Ascending aorta (tissue), 2 donors: ENCODE measurements at regions of chr19 and their contacts with region 1.

Region 1: DNA sequence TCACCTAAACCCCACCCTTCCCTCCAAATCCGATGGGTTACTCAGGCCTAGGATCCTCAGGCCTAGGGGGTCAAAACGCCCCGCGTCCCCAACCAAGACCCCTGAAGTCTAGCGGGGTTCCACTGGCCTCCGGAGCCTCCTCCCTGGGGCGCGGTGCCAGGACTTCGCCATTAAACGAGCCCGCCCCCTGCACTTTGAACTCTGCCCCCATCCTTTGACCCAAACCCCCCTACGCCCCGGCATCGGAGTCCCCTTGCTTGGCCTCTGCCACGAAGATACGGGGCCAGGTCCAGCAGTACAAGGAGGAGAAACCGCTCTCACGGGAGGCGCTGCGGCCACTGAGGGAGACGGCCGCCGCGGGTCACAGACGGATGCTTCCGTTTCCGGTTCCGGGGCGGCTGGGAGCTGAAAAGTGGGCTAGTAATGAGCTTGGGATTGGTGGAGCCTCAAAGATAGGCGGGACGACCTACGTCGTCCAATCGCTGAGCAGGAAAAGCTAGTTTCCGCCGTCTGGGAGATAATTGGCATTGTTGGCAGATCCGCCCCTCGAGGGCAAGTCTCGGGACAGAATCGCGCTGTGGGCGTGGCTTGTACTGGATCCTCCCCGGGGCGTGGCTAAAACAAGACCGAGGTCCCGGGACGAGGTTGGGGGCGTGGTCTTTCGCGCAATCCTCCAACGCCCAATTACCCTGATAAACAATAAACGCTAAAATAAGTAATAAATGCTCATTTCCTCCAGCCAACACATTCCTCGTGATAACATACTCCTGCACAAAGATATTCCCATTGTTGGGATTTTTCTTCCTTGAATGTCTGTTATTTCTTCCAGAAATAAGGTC is 5.7 kb upstream of the ZNF77 start:
- DNase-seq: peak; percentile 99 to 100
- H3K4me3 ChIP-seq: peak overlapping the region; percentile 83 to 86
- H3K27ac ChIP-seq: peak overlapping the region; percentile 97
- H3K4me1 ChIP-seq: peaks cover 6 to 10% of the 10 kb centered on the region in 2 donors
- H3K27me3 ChIP-seq: no peaks in the 10 kb centered on the region
- CTCF ChIP-seq: no peak

Region 2: DNA sequence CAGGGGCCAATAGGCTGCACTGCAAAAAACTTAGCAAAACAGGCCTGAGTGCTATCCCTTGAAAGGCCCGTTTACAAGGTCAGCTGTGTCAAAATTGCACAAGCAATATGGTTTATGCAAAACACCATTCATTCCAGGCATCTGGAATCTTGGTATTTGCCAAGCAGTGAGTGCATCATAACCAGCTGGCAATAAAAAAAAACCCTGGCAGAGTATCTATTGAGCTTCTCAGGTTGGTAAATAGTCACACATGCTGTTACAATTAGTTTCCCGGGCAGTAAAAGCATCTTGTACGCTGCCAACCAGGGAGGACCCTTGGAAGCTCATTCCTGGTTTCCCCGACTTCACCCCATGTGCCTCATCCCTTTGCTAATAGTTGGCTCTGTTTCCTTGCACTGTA is 27.0 kb before region 1 on chr19:
- intact Hi-C with region 1: no loop called
- DNase-seq: peak in 1 of 2 donors; percentile 58
- H3K4me3 ChIP-seq: no peak overlapping the region
- H3K27ac ChIP-seq: no peak overlapping the region
- H3K4me1 ChIP-seq: no peaks in the 10 kb centered on the region
- H3K27me3 ChIP-seq: no peaks in the 10 kb centered on the region
- CTCF ChIP-seq: no peak

Region 3: GRCh38 chr19:2977001-2977685 is 26.6 kb after region 1 on chr19 and contains the start of gene TLE6:
- intact Hi-C with region 1: loop called (anchors 2 kb)
- DNase-seq: peak; percentile 81 to 95
- H3K4me3 ChIP-seq: peak within 1 kb of the TSS; percentile 57 to 67
- H3K27ac ChIP-seq: peak within 1 kb of the TSS; percentile 44 to 50
- H3K4me1 ChIP-seq: peaks cover 15 to 24% of the 10 kb centered on the region in 2 donors
- H3K27me3 ChIP-seq: no peaks in the 10 kb centered on the region
- CTCF ChIP-seq: no peak
- total RNA-seq, gene TLE6: not detected

Region 4: GRCh38 chr19:3062168-3063102 is 111.9 kb after region 1 on chr19 and contains the start of gene TLE5:
- intact Hi-C with region 1: loop called (anchors 2 kb)
- DNase-seq: peak in 1 of 2 donors; percentile 77
- H3K4me3 ChIP-seq: peak within 1 kb of the TSS; percentile 75 to 86
- H3K27ac ChIP-seq: peak within 1 kb of the TSS; percentile 87
- H3K4me1 ChIP-seq: peaks cover 13 to 14% of the 10 kb centered on the region in 2 donors
- H3K27me3 ChIP-seq: no peaks in the 10 kb centered on the region
- CTCF ChIP-seq: no peak
- total RNA-seq, gene TLE5: 559 TPM

Region 5: DNA sequence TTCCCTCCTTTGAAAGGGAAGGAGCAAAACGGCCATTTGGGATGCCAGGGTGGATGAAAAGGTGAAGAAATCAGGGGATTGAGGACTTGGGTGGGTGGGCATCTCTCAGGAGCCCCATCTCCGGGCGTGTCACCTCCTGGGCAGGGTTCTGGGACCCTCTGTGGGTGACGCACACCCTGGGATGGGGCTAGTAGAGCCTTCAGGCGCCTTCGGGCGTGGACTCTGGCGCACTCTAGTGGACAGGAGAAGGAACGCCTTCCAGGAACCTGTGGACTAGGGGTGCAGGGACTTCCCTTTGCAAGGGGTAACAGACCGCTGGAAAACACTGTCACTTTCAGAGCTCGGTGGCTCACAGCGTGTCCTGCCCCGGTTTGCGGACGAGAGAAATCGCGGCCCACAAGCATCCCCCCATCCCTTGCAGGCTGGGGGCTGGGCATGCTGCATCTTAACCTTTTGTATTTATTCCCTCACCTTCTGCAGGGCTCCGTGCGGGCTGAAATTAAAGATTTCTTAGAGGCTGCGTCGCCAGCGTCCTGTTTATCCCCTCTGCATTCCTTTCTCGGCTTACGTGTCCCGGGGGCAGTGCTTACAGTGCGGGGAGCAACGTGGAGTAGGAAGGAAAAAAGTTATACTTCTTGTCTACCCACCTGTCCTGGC is 212.9 kb after region 1 on chr19:
- intact Hi-C with region 1: loop called (anchors 5 kb)
- DNase-seq: no peak
- H3K4me3 ChIP-seq: no peak overlapping the region
- H3K27ac ChIP-seq: no peak overlapping the region
- H3K4me1 ChIP-seq: no peaks in the 10 kb centered on the region
- H3K27me3 ChIP-seq: no peaks in the 10 kb centered on the region
- CTCF ChIP-seq: peak; percentile 84 to 97 (median 90)